Activated B cell treated with CpG ODN at 0.5 μM for 24 hours (primary cell): ENCODE measurements at regions of chr6 and their contacts with region 1.

Region 1: DNA sequence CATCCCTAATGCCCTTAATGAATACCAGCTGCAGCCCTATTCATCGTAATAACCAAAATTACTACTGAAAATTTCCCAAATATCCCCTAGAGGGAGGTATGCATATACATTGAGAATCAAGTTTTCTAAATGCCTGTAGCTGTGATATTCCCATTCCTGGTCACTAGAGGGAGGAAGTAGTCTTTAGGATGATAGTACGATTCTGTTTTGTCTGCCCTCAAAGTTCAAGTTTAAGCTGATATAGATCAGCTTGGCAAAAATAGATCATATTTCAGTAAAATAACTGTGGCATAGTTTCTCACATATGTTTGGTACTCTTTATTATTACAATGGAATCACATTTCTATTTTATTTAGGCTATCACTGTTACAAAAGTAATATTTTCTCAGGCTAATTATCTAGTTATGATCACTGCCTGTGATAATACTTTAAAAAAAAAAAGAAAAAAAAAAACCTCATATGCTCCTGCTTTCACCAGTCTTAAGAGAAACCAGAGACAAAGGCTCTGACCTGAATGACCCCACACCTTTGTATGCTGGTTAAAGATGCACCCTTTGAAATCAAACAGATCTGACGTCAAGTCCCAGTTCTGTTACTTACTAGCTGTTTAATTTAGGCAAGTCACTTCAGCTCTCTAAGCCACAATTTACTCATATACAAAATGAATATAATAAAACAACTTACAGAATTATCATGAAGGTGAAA is 11.0 kb downstream of the TSPYL1 start:
- DNase-seq: no peak
- ATAC-seq: peak; percentile 91
- H3K4me3 Mint-ChIP-seq: no peak overlapping the region
- H3K27ac Mint-ChIP-seq: no peak overlapping the region
- H3K4me1 Mint-ChIP-seq: peaks cover 17% of the 10 kb centered on the region
- H3K27me3 Mint-ChIP-seq: no peaks in the 10 kb centered on the region
- CTCF ChIP-seq: peak; percentile 28

Region 2: DNA sequence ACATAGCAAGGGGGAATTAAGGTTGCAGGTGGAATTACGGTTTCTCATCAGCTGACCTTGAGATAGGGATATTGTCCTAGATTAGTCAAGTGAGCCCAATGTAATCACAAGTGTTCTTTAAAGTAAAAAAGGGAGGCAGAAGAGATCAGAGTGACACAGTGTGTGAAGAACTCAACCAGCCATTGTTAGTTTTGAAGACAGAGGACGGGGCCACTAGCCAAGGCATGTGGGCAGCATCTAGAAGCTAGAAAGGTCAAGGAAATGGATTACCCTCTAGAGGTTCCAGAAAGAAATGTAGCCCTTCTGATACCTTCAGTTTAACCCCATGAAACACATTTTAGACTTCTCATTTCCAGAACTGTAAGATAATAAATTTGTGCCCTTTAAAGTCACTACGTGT is 29.5 kb after region 1 on chr6:
- CTCF ChIA-PET with region 1: no interaction called
- POLR2A ChIA-PET with region 1: no interaction called
- intact Hi-C with region 1: no loop called
- DNase-seq: no peak
- ATAC-seq: no peak
- H3K4me3 Mint-ChIP-seq: no peak overlapping the region
- H3K27ac Mint-ChIP-seq: no peak overlapping the region
- H3K4me1 Mint-ChIP-seq: peaks cover 13% of the 10 kb centered on the region
- H3K27me3 Mint-ChIP-seq: no peaks in the 10 kb centered on the region
- CTCF ChIP-seq: no peak

Region 3: GRCh38 chr6:116561377-116562018 is 292.8 kb after region 1 on chr6:
- CTCF ChIA-PET with region 1: interaction called, 40 read pairs
- POLR2A ChIA-PET with region 1: no interaction called
- intact Hi-C with region 1: loop called (anchors 1 kb)
- DNase-seq: peak; percentile 37
- ATAC-seq: peak; percentile 81
- H3K4me3 Mint-ChIP-seq: no peak overlapping the region
- H3K27ac Mint-ChIP-seq: no peak overlapping the region
- H3K4me1 Mint-ChIP-seq: peaks cover 2% of the 10 kb centered on the region
- H3K27me3 Mint-ChIP-seq: peaks cover 14% of the 10 kb centered on the region
- CTCF ChIP-seq: peak; percentile 50

Region 4: DNA sequence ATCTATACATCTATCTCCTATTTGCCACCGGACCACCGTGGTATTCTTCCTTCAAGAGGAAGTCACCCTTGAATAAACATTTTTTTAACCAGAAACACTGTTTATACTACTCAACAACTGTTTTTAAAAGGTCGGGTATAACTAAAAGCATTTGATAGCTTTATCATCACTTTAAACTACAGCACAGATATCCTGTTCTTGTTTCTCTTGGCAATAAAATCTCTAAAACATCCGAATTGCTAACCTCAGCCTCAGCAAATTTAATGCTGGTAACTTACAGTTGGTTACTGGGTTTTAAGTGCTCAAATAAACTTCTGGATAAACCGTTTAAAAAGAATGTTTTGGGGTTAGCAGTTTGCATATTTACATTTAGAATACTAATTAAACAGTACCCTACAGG is 379.4 kb after region 1 on chr6:
- CTCF ChIA-PET with region 1: interaction called, 5 read pairs
- POLR2A ChIA-PET with region 1: no interaction called
- intact Hi-C with region 1: loop called (anchors 5 kb)
- DNase-seq: no peak
- ATAC-seq: no peak
- H3K4me3 Mint-ChIP-seq: no peak overlapping the region
- H3K27ac Mint-ChIP-seq: no peak overlapping the region
- H3K4me1 Mint-ChIP-seq: peaks cover 2% of the 10 kb centered on the region
- H3K27me3 Mint-ChIP-seq: no peaks in the 10 kb centered on the region
- CTCF ChIP-seq: no peak